ENCODE measurements at regions of chr1 and their contacts with region 1.

Region 1: DNA sequence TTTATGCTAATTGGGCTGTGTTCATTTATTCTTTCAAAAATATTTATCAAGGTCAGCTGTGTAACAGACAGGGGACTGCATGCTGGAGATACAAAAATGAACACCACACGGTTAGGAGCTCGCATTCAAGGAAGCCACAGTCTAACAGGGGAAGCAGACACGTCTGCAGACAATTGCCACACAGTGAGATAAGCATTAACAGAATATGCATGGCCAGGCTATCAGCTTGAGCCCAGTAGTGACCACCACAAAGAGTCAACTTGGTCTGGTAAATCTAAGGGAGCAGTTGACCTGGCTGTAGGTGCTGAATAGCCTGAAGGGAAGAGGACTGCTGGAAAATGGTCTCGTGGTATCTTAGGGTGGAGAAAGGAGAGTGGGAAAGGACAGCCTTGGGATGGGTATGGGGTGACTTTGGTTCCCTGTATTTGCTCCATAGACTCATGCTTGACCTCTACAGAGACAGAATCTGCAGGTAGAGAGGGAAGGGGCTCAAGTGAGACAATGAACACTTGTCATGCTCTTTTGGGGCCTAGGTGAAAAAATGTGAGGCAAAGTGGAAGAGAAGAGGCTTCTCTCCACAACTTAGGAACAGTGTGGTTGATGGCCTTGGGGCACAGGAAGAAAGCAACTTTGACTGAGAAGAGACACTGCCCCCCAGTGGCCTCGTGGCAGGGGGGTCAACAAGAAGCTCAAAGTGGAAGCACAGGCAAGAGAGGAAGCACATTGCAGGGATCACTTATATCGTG is 7.6 kb upstream of the NPL start:
- DNase-seq: peak; percentile 80
- ATAC-seq: peak; percentile 83
- H3K4me3 ChIP-seq: no peak overlapping the region
- H3K4me3 Mint-ChIP-seq: no peak overlapping the region
- H3K27ac ChIP-seq: no peak overlapping the region
- H3K27ac Mint-ChIP-seq: no peak overlapping the region
- H3K4me1 ChIP-seq: no peaks in the 10 kb centered on the region
- H3K4me1 Mint-ChIP-seq: peaks cover 5% of the 10 kb centered on the region
- H3K27me3 ChIP-seq: no peaks in the 10 kb centered on the region
- H3K27me3 Mint-ChIP-seq: no peaks in the 10 kb centered on the region
- CTCF ChIP-seq: peak; percentile 81

Region 2: DNA sequence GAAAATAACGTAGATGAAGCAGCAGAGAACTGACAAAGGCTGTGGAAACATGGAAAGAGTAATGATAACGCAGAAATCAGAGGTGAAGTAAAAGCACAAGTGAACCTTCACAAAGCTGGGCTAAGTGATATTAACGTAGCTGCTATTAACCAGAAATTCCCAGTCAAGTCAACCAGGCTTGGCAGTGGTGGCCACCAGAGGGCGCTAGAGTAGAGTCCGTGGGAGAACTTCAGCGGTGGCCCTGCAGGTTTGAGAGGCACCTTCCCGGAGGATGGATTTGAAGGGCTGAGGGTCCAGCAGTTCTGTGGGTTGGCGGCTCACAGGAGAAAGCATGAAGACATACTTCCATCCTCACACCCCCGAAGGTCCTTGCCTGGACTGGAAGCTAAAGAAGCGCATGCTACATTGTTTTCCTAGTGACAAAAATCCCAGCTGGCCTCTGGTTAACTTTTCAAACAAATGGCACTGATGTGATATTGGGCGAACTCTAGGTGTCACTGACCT is 638.8 kb before region 1 on chr1:
- CTCF ChIA-PET with region 1: interaction called, 15 read pairs
- POLR2A ChIA-PET with region 1: no interaction called
- intact Hi-C with region 1: loop called (anchors 5 kb)
- DNase-seq: peak; percentile 79
- ATAC-seq: peak; percentile 61
- H3K4me3 ChIP-seq: no peak overlapping the region
- H3K4me3 Mint-ChIP-seq: no peak overlapping the region
- H3K27ac ChIP-seq: no peak overlapping the region
- H3K27ac Mint-ChIP-seq: no peak overlapping the region
- H3K4me1 ChIP-seq: peaks cover 0 to 9% of the 10 kb centered on the region in 2 donors
- H3K4me1 Mint-ChIP-seq: peaks cover 8% of the 10 kb centered on the region
- H3K27me3 ChIP-seq: peaks cover 0 to 4% (median 0%) of the 10 kb centered on the region in 4 experiments
- H3K27me3 Mint-ChIP-seq: peaks cover 20% of the 10 kb centered on the region
- CTCF ChIP-seq: peak; percentile 90

Region 3: GRCh38 chr1:182484591-182485257 is 297.3 kb before region 1 on chr1:
- CTCF ChIA-PET with region 1: interaction called, 13 read pairs
- POLR2A ChIA-PET with region 1: no interaction called
- intact Hi-C with region 1: no loop called
- DNase-seq: peak; percentile 79
- ATAC-seq: peak; percentile 99
- H3K4me3 ChIP-seq: no peak overlapping the region
- H3K4me3 Mint-ChIP-seq: peak overlapping the region; percentile 12
- H3K27ac ChIP-seq: no peak overlapping the region
- H3K27ac Mint-ChIP-seq: peak overlapping the region; percentile 10
- H3K4me1 ChIP-seq: peaks cover 19 to 22% of the 10 kb centered on the region in 2 donors
- H3K4me1 Mint-ChIP-seq: peaks cover 38% of the 10 kb centered on the region
- H3K27me3 ChIP-seq: no peaks in the 10 kb centered on the region
- H3K27me3 Mint-ChIP-seq: no peaks in the 10 kb centered on the region
- CTCF ChIP-seq: peak; percentile 69

Region 4: DNA sequence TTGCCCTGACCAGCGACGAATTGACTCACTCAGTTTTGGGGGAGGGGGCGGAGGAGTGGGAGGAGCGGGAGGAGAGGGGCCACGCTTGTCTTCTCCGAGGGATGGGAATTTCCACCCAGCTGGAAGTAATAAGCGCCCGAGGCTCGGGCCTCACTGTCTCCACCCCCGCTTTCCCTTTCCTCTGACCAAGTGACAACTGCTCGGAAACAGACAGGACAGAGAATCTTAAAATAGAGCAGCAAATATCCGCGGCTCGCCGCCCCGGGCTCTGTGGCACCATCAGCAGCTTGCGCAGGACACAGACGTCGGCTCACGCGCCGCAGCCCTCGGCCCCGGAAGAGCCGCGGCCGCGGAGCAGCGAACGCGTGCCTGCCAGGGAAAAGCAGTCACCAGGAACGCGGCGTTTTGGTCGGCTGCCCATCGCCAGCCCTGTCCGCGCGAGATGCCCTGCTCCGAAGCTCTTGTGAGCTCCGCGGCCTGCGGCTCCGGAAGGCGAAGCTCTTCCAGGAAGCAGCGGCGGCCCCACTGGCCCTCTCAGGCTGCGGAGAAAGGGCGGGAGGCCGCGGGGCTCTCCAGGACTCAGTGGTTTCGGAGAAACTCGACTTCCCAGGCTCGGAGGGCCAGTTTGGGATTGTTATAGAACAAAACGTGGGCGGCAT is 167.1 kb before region 1 on chr1:
- CTCF ChIA-PET with region 1: interaction called, 19 read pairs
- POLR2A ChIA-PET with region 1: no interaction called
- intact Hi-C with region 1: loop called (anchors 5 kb)
- DNase-seq: peak; percentile 83
- ATAC-seq: peak; percentile 73
- H3K4me3 ChIP-seq: peak overlapping the region; percentile 50 to 89 (median 63)
- H3K4me3 Mint-ChIP-seq: peak overlapping the region; percentile 92
- H3K27ac ChIP-seq: peak overlapping the region in 1 of 2 donors; percentile 71
- H3K27ac Mint-ChIP-seq: peak overlapping the region; percentile 77
- H3K4me1 ChIP-seq: peaks cover 25 to 28% of the 10 kb centered on the region in 2 donors
- H3K4me1 Mint-ChIP-seq: peaks cover 29% of the 10 kb centered on the region
- H3K27me3 ChIP-seq: peaks cover 2 to 38% (median 11%) of the 10 kb centered on the region in 4 experiments
- H3K27me3 Mint-ChIP-seq: peaks cover 8% of the 10 kb centered on the region
- CTCF ChIP-seq: no peak

Region 5: DNA sequence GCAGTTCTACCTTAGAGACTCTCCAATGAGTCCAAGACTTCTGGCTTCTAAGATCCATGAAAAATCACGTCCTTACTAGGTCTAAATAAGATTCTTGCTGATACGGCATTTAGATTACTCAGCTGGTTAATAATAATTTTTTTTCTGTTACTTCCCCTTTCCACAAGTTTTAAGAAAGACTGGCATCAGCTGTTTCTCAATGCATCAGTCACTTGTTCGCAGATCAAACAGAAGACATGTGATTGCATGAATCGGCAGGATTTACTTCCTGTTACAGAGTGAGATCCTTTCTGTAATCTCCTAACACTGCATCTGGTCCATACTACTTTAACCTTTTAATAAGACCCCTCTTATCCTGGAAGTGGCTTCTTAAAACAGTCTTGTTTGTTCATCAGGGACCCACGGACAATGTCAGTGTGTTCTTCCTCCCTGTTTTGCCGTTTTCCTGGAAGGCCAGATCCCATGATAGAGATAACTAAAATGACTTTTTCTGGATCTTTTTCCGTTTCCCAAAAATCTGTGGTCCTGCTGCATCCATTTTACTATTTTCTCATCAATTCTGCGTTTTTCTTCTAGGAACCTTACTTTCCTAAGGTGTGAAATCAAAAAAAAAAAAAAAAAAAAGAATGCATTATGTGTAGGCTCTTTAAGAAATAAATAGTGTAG is 13.7 kb after region 1 on chr1:
- CTCF ChIA-PET with region 1: interaction called, 16 read pairs
- POLR2A ChIA-PET with region 1: no interaction called
- intact Hi-C with region 1: no loop called
- DNase-seq: peak; percentile 47
- ATAC-seq: peak; percentile 28
- H3K4me3 ChIP-seq: peak overlapping the region in 1 of 5 experiments; percentile 15
- H3K4me3 Mint-ChIP-seq: no peak overlapping the region
- H3K27ac ChIP-seq: no peak overlapping the region
- H3K27ac Mint-ChIP-seq: no peak overlapping the region
- H3K4me1 ChIP-seq: peaks cover 0 to 8% of the 10 kb centered on the region in 2 donors
- H3K4me1 Mint-ChIP-seq: peaks cover 12% of the 10 kb centered on the region
- H3K27me3 ChIP-seq: peaks cover 0 to 6% (median 0%) of the 10 kb centered on the region in 4 experiments
- H3K27me3 Mint-ChIP-seq: peaks cover 3% of the 10 kb centered on the region
- CTCF ChIP-seq: no peak

Measured in B cell (primary cell).